ENCODE measurements at regions of chr5 and their contacts with region 1.

Region 1: DNA sequence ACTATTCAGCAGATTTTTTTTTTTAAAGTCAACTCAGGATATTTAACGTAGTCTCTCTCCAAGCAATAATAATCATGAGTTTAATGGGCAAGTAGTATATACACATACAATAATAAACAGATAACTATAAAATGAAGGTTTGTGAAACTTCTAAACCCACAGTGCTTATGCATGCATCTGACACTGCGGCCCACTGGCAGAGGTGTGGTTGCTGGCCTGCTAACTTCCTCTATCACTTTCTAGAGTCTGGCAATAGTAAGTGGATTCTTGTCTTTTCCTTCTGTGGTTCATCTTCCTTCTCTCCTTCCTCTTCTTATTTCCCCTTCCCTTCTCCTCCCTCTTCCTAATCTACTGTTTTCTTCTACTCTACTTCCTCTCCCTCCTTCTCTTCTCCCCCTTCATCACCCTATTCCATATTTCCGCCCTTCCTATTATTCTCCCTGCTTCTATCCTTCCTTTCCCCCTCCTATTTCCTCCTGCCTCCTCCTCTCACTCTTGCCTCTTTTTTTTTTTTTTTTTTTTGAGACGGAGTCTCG is 18.6 kb upstream of the AGXT2 start:
- DNase-seq: no peak
- H3K4me3 ChIP-seq: no peak overlapping the region
- H3K27ac ChIP-seq: no peak overlapping the region
- H3K4me1 ChIP-seq: no peaks in the 10 kb centered on the region
- H3K27me3 ChIP-seq: no peaks in the 10 kb centered on the region
- CTCF ChIP-seq: no peak
- POLR2A ChIP-seq: no peak

Region 2: DNA sequence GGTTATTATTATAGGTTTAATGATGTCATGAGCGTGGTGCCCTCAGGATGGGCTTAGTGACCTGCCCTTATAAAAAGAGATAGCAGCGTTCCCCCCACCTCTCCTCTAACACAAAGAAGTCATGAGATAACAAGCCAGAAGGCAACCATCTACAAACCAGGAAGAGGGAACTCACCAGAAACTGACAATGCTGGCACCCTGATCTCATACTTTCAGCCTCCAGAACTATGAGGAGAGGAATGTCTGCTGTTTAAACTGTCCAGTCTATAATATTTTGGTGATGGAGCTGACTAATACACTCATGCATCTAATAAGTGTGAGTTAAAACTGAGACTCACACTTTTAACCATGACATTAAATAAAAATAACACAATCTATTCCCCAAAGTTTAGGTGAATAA is 395.2 kb after region 1 on chr5:
- intact Hi-C with region 1: loop called (anchors 10 kb)
- DNase-seq: no peak
- H3K4me3 ChIP-seq: no peak overlapping the region
- H3K27ac ChIP-seq: no peak overlapping the region
- H3K4me1 ChIP-seq: no peaks in the 10 kb centered on the region
- H3K27me3 ChIP-seq: no peaks in the 10 kb centered on the region
- CTCF ChIP-seq: no peak
- POLR2A ChIP-seq: no peak